Activated CD8-positive, alpha-beta memory T cell treated with anti-CD3 and anti-CD28 coated beads, Interleukin-2, amount 10 ng/mL, durations not matched to agents 7 days and 5 days (primary cell): ENCODE measurements at regions of chr12 and their contacts with region 1.

Region 1: DNA sequence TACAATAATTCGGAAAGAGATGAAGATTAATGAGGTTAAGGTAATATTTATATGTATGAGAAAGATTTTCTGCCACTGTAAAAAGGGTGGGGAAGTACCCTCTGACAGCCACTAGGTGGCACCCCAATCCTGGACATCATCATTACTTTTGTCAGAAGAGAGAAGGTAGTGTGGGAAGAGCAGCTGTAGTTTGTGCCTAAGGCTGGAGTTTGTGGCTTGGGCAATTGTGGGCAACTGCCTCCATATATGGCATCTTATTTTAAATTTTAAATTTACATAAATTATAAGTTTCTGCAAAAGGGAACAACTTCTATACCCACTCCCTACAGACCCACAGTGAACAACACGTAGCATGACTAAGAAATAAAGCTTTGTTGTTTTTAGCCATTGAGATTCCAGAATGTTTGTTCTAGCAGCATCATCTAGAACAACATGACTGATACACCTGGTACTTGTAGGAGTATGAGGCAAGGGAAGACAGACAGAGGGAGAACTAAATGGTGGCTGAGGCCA is 34.4 kb upstream of the SYCP3 start:
- DNase-seq: peak; percentile 78
- ATAC-seq: peak; percentile 79
- H3K4me3 Mint-ChIP-seq: no peak overlapping the region
- H3K27ac Mint-ChIP-seq: peak overlapping the region; percentile 62
- H3K4me1 Mint-ChIP-seq: peaks cover 30% of the 10 kb centered on the region
- H3K27me3 Mint-ChIP-seq: no peaks in the 10 kb centered on the region

Region 2: DNA sequence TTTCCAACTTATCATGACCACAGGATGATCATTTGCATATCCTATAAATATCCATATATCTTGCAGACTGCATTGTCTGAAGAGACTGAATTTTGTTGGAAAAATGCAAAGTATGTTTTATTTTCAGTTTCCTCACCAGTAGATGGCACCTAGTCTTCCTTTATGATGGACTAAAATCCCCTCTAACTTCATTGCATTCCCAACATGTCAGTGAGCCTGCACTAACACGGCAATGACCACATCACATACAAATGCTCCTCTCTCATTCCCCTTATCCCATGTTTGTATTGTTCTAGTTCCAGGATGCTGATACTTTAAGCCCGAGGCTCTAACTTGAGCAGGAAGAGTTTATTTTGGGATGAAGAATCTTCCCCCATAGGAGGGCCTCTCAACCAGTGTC is 203.7 kb before region 1 on chr12:
- CTCF ChIA-PET with region 1: no interaction called
- DNase-seq: no peak
- ATAC-seq: no peak
- H3K4me3 Mint-ChIP-seq: no peak overlapping the region
- H3K27ac Mint-ChIP-seq: no peak overlapping the region
- H3K4me1 Mint-ChIP-seq: peaks cover 2% of the 10 kb centered on the region
- H3K27me3 Mint-ChIP-seq: peaks cover 49% of the 10 kb centered on the region

Region 3: GRCh38 chr12:101759396-101760047 is 14.2 kb before region 1 on chr12:
- CTCF ChIA-PET with region 1: interaction called, 15 read pairs
- DNase-seq: no peak
- ATAC-seq: no peak
- H3K4me3 Mint-ChIP-seq: no peak overlapping the region
- H3K27ac Mint-ChIP-seq: no peak overlapping the region
- H3K4me1 Mint-ChIP-seq: no peaks in the 10 kb centered on the region
- H3K27me3 Mint-ChIP-seq: no peaks in the 10 kb centered on the region

Region 4: GRCh38 chr12:101792051-101792931 is 18.6 kb after region 1 on chr12:
- CTCF ChIA-PET with region 1: interaction called, 44 read pairs
- DNase-seq: no peak
- ATAC-seq: no peak
- H3K4me3 Mint-ChIP-seq: peak overlapping the region; percentile 7
- H3K27ac Mint-ChIP-seq: peak overlapping the region; percentile 76
- H3K4me1 Mint-ChIP-seq: peaks cover 59% of the 10 kb centered on the region
- H3K27me3 Mint-ChIP-seq: no peaks in the 10 kb centered on the region